ENCODE measurements at regions of chr16 and their contacts with region 1.

Region 1: GRCh38 chr16:401468-402348 is at the start of gene DECR2:
- DNase-seq: peak; percentile 90 to 97 (median 95)
- H3K4me3 ChIP-seq: peak within 1 kb of the TSS; percentile 52 to 95 (median 84)
- H3K27ac ChIP-seq: peak within 1 kb of the TSS; percentile 63 to 98 (median 93)
- H3K27me3 ChIP-seq: no peaks in the 10 kb centered on the region
- CTCF ChIP-seq: peak; percentile 30 to 90 (median 68)
- total RNA-seq, gene DECR2: 7.2 to 23.9 (median 13.5) TPM

Region 2: DNA sequence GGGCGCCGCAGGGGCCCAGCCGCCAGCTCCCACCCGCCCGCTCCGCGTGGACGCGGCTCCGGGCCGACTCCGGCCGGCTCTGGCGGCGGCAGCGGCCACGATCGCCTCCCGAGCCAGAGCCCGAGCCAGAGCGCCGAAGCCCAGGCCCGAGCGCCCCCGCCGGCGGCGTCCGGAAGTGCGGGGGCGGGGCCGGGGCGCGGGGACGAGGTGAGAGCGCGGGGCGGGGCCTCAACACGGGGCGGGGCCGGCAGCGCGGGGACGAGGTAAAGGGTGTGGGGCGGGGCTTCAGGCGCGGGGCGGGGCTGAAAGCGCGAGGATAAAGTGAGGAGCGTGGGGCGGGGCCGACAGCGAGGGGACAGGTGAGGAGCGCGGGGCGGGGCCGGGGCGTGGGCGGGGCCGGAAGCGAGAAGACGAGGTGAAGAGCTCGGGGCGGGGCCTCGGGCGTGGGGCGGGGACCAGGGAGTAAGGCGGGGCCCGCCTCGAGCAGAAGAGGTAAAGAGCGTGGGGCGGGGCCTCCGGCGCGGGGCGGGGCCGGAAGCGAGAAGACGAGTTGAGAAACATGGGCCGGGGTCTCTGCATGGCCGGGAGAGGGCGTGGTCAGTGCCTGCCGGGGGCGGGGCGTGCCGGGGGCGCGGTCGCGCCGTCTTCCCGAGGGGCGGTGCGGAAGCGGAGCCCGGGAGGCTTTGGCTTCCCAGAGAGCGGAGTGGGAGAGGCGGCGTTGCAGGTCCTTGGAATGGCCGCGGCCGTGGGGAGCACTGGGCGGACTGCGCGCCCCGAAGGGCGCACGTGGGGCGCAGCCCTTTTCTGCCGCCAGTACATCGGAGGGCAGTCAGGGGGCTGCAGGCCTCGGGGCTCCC is 48.9 kb before region 1 on chr16 and contains the start of gene AXIN1:
- intact Hi-C with region 1: loop called in 1 of 2 experiments (anchors 5 kb)
- DNase-seq: peak; percentile 85 to 96 (median 90)
- H3K4me3 ChIP-seq: peak within 1 kb of the TSS; percentile 50 to 84 (median 71)
- H3K27ac ChIP-seq: peak within 1 kb of the TSS in 54 of 59 donors; percentile 33 to 88 (median 73)
- H3K27me3 ChIP-seq: no peaks in the 10 kb centered on the region
- CTCF ChIP-seq: peak in 42 of 56 donors; percentile 6 to 64 (median 32)
- total RNA-seq, gene AXIN1: 13.3 to 34.4 (median 19.8) TPM

Region 3: GRCh38 chr16:425082-425718 is 23.5 kb after region 1 on chr16 and contains the start of gene RAB11FIP3:
- intact Hi-C with region 1: loop called in 1 of 2 experiments (anchors 2 kb)
- DNase-seq: peak; percentile 75 to 93 (median 88)
- H3K4me3 ChIP-seq: peak within 1 kb of the TSS; percentile 66 to 95 (median 82)
- H3K27ac ChIP-seq: peak within 1 kb of the TSS; percentile 70 to 98 (median 92)
- H3K27me3 ChIP-seq: no peaks in the 10 kb centered on the region
- CTCF ChIP-seq: peak in 53 of 56 donors; percentile 10 to 72 (median 46)
- total RNA-seq, gene RAB11FIP3: 84.7 to 179 (median 116) TPM

Region 4: DNA sequence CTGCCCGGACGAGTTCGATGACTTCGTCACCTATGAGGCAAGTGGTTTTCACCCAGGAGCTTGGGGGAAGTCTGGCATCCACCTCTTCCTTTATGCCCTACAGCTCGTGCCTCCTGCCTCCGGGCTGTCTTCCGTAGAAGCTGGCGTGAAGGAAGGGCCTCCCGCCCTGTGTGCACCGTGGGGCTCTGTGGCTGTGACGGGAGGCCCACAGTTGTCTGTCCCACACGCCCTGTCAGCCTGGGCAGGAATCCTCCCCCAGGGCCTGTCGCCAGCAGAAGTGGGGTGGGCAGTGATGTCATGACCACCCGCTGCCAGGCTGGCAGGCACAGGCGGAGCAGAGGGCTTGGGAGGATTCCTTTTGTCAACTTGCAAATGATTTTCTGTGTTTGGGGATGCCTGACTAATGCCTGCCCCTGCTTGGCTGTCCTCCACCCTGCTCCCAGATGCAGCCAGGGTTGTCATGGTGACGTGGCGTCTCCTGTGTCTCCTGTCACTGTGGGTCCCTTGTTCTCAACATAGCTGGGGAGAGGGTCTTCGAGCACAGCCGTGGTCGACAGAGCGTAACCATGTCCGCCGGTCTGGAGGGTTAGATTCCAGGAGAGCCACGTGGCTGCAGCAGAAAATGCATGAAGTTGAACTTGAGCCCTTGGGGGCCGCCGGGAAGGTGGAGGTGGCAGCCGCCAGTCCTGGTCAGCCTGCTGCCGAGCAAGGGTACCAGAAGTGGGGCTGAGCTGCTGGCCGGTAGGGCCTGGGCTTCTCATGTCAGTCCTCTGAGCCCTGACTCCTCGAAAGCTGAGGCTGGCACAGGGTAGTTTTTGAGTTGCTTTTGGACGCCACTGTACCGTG is 69.9 kb after region 1 on chr16:
- intact Hi-C with region 1: loop called in 1 of 2 experiments (anchors 5 kb)
- DNase-seq: peak; percentile 77 to 95 (median 92)
- H3K4me3 ChIP-seq: peak overlapping the region in 50 of 59 donors; percentile 0 to 59 (median 39)
- H3K27ac ChIP-seq: peak overlapping the region in 58 of 59 donors; percentile 53 to 96 (median 87)
- H3K27me3 ChIP-seq: no peaks in the 10 kb centered on the region
- CTCF ChIP-seq: peak in 9 of 56 donors; percentile 1 to 39 (median 15)

Region 5: DNA sequence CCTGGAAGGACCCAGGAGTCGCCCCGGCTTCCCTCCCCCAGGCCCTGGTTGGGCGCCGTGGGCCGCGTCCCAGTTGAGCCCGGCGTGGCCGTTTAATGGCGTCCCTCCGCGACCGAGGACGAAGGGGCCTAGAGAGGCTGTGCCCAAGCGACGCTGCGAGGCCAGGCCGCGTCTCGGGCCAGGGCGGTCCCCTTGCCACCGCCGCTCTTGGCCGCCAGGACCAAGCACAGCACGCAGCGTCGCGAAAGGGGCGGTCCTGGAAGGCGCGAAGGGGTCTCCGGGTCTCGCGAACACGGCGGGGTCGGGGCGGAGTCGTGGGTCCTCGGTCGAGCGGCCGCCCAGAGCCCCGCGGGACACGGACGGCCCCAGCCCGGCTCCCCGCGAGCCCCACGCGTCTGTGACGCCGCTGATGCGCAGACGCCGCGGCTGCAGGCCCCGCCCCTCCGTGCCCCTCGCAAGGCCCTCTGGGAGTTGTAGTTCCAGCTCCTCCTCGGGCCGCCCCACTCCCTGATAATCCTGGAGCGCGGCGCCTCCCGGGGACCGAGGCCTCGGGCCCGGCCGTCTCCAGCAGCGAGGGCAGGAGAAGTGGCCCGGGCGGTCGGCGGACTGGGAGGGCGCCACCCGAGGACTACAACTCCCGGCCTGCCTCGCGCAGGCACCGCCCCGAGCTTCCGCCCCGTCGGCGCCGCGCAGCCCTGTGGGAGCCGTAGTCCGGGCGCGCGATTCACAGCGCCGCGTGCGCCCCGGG is 125.5 kb after region 1 on chr16 and contains the start of gene CAPN15:
- intact Hi-C with region 1: loop called in 1 of 2 experiments (anchors 5 kb)
- DNase-seq: peak; percentile 63 to 90 (median 80)
- H3K4me3 ChIP-seq: peak within 1 kb of the TSS; percentile 65 to 96 (median 85)
- H3K27ac ChIP-seq: peak within 1 kb of the TSS; percentile 93 to 100 (median 99)
- H3K27me3 ChIP-seq: no peaks in the 10 kb centered on the region
- CTCF ChIP-seq: peak in 19 of 56 donors; percentile 4 to 43 (median 21)
- total RNA-seq, gene CAPN15: 18.8 to 69.8 (median 34.2) TPM